ENCODE measurements at regions of chr6 and their contacts with region 1.

Region 1: DNA sequence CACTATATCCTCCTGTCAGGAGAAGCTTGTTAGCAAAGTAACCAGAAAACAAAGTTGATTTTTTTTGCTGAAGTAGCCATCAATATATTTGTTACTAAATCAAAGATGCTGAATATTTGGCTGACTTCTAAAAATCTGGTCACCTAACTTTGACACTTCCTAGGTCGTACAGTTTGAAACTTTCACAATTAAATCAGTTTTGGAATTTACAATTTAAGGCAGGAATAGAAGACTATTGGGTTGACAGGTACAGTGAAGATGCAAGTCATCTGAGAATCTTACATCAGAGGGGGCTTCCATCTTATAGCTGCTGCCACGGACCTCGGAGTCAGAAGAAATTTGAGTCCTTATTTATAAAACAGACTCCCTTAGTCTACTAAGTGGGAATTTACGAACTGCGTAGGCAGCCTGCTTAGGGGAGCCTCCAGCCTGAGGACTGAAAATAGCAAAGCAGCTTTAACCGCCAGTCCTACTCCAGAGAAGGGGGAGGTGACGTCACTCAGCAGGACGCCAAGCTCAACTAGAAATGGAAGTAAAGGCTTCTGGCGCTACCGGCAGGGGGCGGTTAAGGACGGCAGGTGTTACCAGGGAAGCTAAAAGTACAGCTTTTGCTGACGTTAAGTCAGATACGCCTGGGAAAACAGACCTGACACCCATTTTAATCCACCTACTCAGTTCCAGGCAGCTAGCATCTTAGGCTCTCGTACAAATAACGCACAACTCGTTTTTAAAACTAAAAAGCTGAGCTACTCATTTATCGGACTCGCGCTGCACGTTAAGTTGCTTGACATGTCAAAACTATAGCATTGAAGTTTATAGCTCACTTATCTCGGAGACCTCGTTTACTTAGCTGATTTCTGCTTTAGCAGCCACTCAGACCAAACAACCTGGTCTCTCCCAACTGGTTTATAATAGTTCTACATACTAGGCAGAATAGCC is 61.1 kb upstream of the HFE start:
- DNase-seq: peak; percentile 59
- H3K4me3 ChIP-seq: peak overlapping the region; percentile 70 to 89
- H3K27ac ChIP-seq: peak overlapping the region; percentile 92 to 99
- H3K4me1 ChIP-seq: peaks cover 15 to 34% of the 10 kb centered on the region in 2 experiments; a peak in 3 of 4 replicates
- H3K27me3 ChIP-seq: no peaks in the 10 kb centered on the region
- CTCF ChIP-seq: peak; percentile 91
- EP300 ChIP-seq: peak in 1 of 2 experiments; percentile 22; a peak in 1 of 4 replicates
- RAD21 ChIP-seq: peak; percentile 24; the same call in 1 of the 2 replicates

Region 2: DNA sequence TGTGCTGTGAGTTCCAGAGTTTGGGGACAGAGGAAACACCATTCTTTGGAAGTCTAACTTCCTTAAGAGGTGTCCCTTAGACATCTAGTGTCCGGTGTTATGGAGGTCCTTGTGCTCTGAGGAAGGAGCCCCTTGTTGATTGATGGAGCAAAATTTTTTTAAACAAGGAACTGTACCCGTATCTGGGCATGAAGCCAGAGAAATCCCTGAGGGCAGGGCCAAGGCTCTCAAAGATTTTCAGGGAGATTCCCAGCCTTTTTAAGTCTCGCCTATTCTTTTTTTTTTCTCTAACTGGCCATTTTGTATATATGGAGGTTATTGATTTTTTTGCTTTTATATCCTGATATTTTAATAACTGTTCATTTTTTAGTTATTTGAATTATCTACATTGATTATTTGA is 17.7 kb before region 1 on chr6:
- CTCF ChIA-PET with region 1: interaction called, 4 read pairs
- POLR2A ChIA-PET with region 1: interaction called, 24 read pairs
- DNase-seq: no peak
- H3K4me3 ChIP-seq: no peak overlapping the region
- H3K27ac ChIP-seq: no peak overlapping the region
- H3K4me1 ChIP-seq: no peaks in the 10 kb centered on the region; a peak in 2 of 4 replicates
- H3K27me3 ChIP-seq: no peaks in the 10 kb centered on the region
- CTCF ChIP-seq: no peak
- EP300 ChIP-seq: no peak
- RAD21 ChIP-seq: no peak

Region 3: GRCh38 chr6:26103770-26104456 is 77.8 kb after region 1 on chr6:
- CTCF ChIA-PET with region 1: interaction called, 5 read pairs
- POLR2A ChIA-PET with region 1: interaction called, 19 read pairs
- DNase-seq: peak; percentile 69
- H3K4me3 ChIP-seq: peak overlapping the region; percentile 55 to 65
- H3K27ac ChIP-seq: peak overlapping the region; percentile 85 to 97
- H3K4me1 ChIP-seq: peaks cover 7 to 17% of the 10 kb centered on the region in 2 experiments
- H3K27me3 ChIP-seq: no peaks in the 10 kb centered on the region
- CTCF ChIP-seq: peak; percentile 62
- EP300 ChIP-seq: peak; percentile 91 to 97
- RAD21 ChIP-seq: no peak

Region 4: DNA sequence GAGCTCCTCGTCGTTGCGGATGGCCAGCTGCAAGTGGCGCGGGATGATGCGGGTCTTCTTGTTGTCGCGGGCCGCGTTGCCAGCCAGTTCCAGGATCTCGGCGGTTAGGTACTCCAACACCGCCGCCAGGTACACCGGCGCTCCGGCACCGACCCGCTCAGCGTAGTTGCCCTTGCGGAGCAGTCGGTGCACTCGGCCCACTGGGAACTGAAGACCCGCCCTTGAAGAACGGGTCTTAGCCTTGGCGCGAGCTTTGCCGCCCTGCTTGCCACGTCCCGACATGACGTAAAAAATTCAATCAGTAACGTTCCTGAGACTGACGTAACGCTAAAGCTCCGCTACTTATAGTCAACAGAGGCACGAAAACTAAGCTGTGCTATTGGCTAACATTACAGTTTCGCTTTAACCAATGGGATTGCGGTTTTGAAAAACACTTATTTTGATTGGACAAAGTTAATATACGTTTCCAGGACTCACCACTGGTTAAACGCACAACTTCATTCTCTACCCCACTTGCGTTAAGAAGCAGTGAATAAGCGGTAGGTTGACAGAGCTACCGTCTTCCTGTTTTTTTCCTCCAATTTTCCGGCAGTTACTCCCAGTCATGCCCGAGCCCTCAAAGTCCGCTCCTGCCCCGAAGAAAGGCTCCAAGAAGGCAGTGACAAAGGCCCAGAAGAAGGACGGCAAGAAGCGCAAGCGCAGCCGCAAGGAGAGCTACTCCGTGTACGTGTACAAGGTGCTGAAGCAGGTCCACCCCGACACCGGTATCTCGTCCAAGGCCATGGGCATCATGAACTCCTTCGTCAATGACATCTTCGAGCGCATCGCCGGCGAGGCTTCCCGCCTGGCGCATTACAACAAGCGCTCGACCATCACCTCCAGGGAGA is 1812.1 kb after region 1 on chr6:
- CTCF ChIA-PET with region 1: no interaction called
- POLR2A ChIA-PET with region 1: interaction called, 19 read pairs
- DNase-seq: peak; percentile 84
- H3K4me3 ChIP-seq: peak overlapping the region; percentile 83 to 84
- H3K27ac ChIP-seq: peak overlapping the region; percentile 97 to 99
- H3K4me1 ChIP-seq: peaks cover 0 to 11% of the 10 kb centered on the region in 2 experiments; a peak in 2 of 4 replicates
- H3K27me3 ChIP-seq: no peaks in the 10 kb centered on the region
- CTCF ChIP-seq: no peak
- EP300 ChIP-seq: peak in 1 of 2 experiments; percentile 26; a peak in 1 of 4 replicates
- RAD21 ChIP-seq: no peak

Measured in SK-N-SH (cell line).